Aorta (tissue), 5 donors: ENCODE measurements at regions of chr19 and their contacts with region 1.

Region 1: GRCh38 chr19:14198384-14199376 is 7.3 kb downstream of the ADGRL1 start:
- DNase-seq: no peak
- ATAC-seq: no peak
- H3K4me3 ChIP-seq: no peak overlapping the region
- H3K27ac ChIP-seq: no peak overlapping the region
- H3K4me1 ChIP-seq: no peaks in the 10 kb centered on the region
- H3K27me3 ChIP-seq: no peaks in the 10 kb centered on the region

Region 2: DNA sequence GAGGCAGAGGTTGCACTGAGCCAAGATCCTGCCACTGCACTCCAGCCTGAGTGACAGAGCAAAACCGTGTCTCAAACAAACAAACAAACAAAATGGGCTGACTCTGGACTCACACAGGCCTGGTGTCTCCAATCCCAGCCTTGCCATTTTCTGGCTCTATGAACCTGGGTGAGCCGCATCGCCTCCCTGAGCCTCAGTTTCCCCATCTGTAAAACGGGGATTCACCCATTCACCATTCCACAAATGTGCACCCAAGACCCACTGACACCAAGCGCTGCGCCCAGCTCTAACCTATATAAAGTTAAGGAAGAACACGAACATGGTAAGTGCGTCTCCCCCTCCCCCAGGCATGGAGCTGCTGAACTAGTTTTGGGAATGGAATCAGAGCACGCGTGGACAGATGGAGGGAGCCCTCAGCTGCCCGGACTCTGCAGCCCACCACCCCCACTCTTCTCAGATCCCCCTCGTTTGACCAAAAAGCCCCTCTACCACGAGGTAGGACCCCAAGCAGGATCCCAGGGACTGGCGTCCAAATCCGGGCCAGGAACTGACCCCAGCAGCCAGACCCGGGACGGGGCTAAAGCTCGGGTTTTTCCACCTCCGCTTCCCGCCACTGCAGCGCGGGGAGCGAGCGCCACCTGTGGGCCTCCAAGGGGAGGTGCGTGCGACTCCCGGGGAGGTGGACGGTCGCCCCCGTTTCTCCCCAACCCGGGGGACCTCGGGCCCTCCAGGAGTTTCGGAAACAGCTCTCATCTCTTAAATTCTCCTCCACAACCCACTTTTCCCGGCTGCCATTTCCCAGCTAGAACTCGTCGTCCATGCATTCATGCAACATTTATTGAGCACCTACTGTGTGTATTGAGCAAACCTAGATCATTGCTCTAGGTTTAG is 149.6 kb after region 1 on chr19:
- intact Hi-C with region 1: loop called (anchors 5 to 10 kb)
- DNase-seq: peak; percentile 79 to 90
- ATAC-seq: peak; percentile 90
- H3K4me3 ChIP-seq: no peak overlapping the region
- H3K27ac ChIP-seq: no peak overlapping the region
- H3K4me1 ChIP-seq: no peaks in the 10 kb centered on the region
- H3K27me3 ChIP-seq: no peaks in the 10 kb centered on the region

Region 3: DNA sequence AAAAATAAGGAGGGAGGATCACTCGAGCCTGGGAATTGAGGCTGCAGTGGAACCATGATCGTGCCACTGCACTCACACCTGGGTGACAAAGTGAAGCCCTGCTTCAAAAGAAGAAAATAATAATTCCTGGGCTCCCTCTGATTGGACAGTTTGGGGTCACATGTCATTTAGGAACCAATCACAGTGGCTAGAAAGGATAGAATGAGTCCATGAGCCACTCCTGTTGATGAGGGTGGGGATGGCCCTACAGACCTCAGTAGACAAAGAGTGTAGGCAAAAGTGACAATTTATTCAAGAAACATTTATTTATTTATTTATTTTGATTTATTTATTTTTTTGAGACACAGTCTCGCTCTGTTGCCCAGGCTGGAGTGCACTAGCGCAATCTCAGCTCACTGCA is 155.8 kb after region 1 on chr19:
- intact Hi-C with region 1: loop called (anchors 5 to 10 kb)
- DNase-seq: no peak
- ATAC-seq: no peak
- H3K4me3 ChIP-seq: no peak overlapping the region
- H3K27ac ChIP-seq: no peak overlapping the region
- H3K4me1 ChIP-seq: no peaks in the 10 kb centered on the region
- H3K27me3 ChIP-seq: no peaks in the 10 kb centered on the region